IMR-90 (cell line): ENCODE measurements at regions of chr6 and their contacts with region 1.

Region 1: DNA sequence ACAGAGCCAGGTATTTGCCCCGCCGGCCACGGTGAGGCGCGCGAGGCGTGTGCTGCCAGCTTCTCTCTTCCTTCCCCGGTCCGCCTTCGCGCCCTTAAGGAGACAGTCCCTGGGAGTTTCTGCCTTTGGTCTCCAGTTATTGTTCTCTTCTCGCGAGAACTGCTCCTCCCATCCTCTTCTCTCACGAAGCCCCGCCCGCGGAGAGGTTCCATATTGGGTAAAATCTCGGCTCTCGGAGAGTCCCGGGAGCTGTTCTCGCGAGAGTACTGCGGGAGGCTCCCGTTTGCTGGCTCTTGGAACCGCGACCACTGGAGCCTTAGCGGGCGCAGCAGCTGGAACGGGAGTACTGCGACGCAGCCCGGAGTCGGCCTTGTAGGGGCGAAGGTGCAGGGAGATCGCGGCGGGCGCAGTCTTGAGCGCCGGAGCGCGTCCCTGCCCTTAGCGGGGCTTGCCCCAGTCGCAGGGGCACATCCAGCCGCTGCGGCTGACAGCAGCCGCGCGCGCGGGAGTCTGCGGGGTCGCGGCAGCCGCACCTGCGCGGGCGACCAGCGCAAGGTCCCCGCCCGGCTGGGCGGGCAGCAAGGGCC is at the start of gene MAPK14:
- DNase-seq: peak; percentile 100
- ATAC-seq: peak; percentile 85
- H3K4me3 ChIP-seq: peak within 1 kb of the TSS; percentile 65
- H3K27ac ChIP-seq: peak within 1 kb of the TSS; percentile 94
- H3K4me1 ChIP-seq: peaks cover 6% of the 10 kb centered on the region; the same call in 1 of the 2 replicates
- H3K27me3 ChIP-seq: no peaks in the 10 kb centered on the region
- CTCF ChIP-seq: peak; percentile 95
- POLR2A ChIP-seq: peak; percentile 88
- RAD21 ChIP-seq: peak; percentile 88
- total RNA-seq, gene MAPK14: 69.7 and 74.4 TPM in 2 replicates

Region 2: DNA sequence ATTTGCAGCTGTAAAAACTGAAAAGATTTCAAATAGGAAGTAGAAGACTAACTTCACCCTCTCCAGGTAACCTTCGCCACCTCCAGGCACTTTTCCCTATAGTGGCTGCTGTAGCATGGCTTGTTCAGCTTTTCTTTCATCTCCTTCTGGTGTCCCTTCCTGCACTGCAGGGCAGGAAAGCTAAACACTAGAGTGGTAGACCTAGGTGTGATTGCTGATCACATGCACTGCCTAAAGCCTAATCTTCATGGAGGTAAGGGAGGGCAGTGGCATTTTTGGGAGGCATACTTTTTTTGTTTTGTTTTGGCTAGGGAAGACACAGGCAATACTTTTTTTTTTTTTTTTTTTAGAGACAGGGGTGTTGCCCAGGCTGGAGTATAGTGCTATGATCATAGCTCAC is 259.4 kb before region 1 on chr6:
- CTCF ChIA-PET with region 1: no interaction called
- POLR2A ChIA-PET with region 1: interaction called, 13 read pairs
- dilution Hi-C with region 1: no loop called
- in situ Hi-C with region 1: no loop called
- intact Hi-C with region 1: no loop called
- DNase-seq: no peak
- ATAC-seq: no peak
- H3K4me3 ChIP-seq: no peak overlapping the region
- H3K27ac ChIP-seq: no peak overlapping the region
- H3K4me1 ChIP-seq: no peaks in the 10 kb centered on the region
- H3K27me3 ChIP-seq: peaks cover 43% of the 10 kb centered on the region
- CTCF ChIP-seq: no peak
- POLR2A ChIP-seq: no peak
- RAD21 ChIP-seq: no peak

Region 3: GRCh38 chr6:35920793-35921732 is 106.5 kb before region 1 on chr6 and contains the start of gene SRPK1:
- CTCF ChIA-PET with region 1: no interaction called
- POLR2A ChIA-PET with region 1: no interaction called
- dilution Hi-C with region 1: no loop called
- in situ Hi-C with region 1: no loop called
- intact Hi-C with region 1: loop called (anchors 2 kb)
- DNase-seq: peak; percentile 74
- ATAC-seq: peak; percentile 93
- H3K4me3 ChIP-seq: peak within 1 kb of the TSS; percentile 88
- H3K27ac ChIP-seq: peak within 1 kb of the TSS; percentile 67
- H3K4me1 ChIP-seq: no peaks in the 10 kb centered on the region; the same call in 1 of the 2 replicates
- H3K27me3 ChIP-seq: no peaks in the 10 kb centered on the region
- CTCF ChIP-seq: no peak
- POLR2A ChIP-seq: peak; percentile 48; the same call in 1 of the 2 replicates
- RAD21 ChIP-seq: no peak
- total RNA-seq, gene SRPK1: 44.6 and 92.8 TPM in 2 replicates

Region 4: DNA sequence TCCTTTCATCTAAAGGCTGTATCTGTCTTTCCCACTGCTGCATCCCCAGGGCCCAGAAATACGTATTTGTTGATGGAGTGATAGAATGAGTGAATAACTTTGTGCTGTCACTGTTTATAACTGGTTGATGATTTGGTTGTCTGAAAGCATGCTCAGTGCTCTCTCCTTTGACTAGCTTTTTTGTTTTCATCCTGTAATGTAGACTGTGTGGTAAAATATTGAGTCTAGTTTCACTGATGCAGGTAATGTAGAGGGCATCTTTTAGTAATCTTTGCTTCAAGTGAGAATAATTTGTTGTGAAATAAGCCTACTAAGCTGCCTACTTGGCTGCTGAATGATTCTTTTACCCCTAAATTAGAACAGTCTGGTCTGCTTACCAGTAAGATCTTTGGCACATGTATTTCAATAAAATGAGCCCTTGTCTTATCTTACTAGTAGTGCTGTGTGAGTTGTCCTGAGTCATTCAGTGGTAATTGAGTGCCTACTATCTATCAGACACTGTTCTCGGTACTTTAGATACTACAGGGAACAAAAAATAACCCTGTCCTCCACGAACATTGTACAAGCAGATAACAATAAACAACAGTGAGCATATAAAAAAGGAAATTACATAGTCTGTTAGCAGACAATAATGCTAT is 39.9 kb after region 1 on chr6:
- CTCF ChIA-PET with region 1: no interaction called
- POLR2A ChIA-PET with region 1: no interaction called
- dilution Hi-C with region 1: no loop called
- in situ Hi-C with region 1: no loop called
- intact Hi-C with region 1: loop called (anchors 5 kb)
- DNase-seq: peak; percentile 49
- ATAC-seq: peak; percentile 27; the same call in 1 of the 2 replicates
- H3K4me3 ChIP-seq: no peak overlapping the region
- H3K27ac ChIP-seq: no peak overlapping the region
- H3K4me1 ChIP-seq: peaks cover 9% of the 10 kb centered on the region
- H3K27me3 ChIP-seq: no peaks in the 10 kb centered on the region
- CTCF ChIP-seq: no peak
- POLR2A ChIP-seq: no peak
- RAD21 ChIP-seq: no peak

Region 5: DNA sequence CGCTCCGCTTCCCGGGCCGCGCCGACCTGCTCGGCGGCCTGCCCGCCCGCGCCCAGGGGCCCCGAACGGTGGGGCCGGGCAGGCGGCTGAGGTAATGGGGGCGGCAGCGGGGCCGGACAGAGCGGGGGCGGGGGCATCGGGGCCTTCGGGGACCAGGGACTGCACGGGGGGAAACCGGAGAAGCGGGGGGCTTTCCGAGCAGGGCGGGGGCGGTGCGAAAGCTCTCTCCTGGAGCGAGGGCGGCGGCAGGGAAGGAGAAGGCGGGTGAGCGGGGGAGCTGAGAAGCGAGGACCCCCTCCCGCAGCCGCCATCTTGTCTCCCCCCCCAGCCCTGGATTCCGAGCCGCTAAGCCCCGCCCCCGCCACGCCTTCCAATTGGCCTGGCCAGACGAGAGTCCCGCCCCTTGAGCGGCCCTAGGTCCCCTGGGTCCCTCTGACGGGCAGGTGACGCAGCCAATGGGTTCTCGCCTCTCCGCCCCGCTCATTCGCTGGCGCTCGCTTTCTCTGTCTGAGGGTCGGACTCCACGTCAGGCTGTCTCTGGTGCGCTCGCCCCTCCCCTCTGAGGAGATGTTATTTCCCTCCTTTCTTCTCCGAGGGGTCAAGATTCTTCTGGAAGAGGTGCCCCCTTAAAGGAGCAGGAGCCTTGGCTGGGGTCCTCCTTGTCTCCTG is 169.4 kb after region 1 on chr6:
- CTCF ChIA-PET with region 1: no interaction called
- POLR2A ChIA-PET with region 1: no interaction called
- dilution Hi-C with region 1: no loop called
- in situ Hi-C with region 1: loop called (anchors 10 kb)
- intact Hi-C with region 1: loop called (anchors 1 kb)
- DNase-seq: peak; percentile 96
- ATAC-seq: peak; percentile 95
- H3K4me3 ChIP-seq: peak overlapping the region; percentile 65
- H3K27ac ChIP-seq: peak overlapping the region; percentile 97
- H3K4me1 ChIP-seq: peaks cover 6% of the 10 kb centered on the region; the same call in 1 of the 2 replicates
- H3K27me3 ChIP-seq: no peaks in the 10 kb centered on the region
- CTCF ChIP-seq: no peak
- POLR2A ChIP-seq: peak; percentile 57; the same call in 1 of the 2 replicates
- RAD21 ChIP-seq: no peak

Region 6: GRCh38 chr6:36216559-36216958 is 189.0 kb after region 1 on chr6:
- CTCF ChIA-PET with region 1: no interaction called
- POLR2A ChIA-PET with region 1: no interaction called
- dilution Hi-C with region 1: no loop called
- in situ Hi-C with region 1: no loop called
- intact Hi-C with region 1: no loop called
- DNase-seq: peak; percentile 52
- ATAC-seq: peak; percentile 57
- H3K4me3 ChIP-seq: no peak overlapping the region
- H3K27ac ChIP-seq: no peak overlapping the region
- H3K4me1 ChIP-seq: no peaks in the 10 kb centered on the region
- H3K27me3 ChIP-seq: no peaks in the 10 kb centered on the region
- CTCF ChIP-seq: no peak
- POLR2A ChIP-seq: no peak
- RAD21 ChIP-seq: no peak